CD8-positive, alpha-beta T cell (primary cell): ENCODE measurements at regions of chr11 and their contacts with region 1.

Region 1: GRCh38 chr11:46845740-46846509 is at the start of gene CKAP5:
- DNase-seq: peak; percentile 68 to 91 (median 84)
- ATAC-seq: peak; percentile 91
- H3K4me3 ChIP-seq: peak within 1 kb of the TSS; percentile 75 to 85
- H3K4me3 Mint-ChIP-seq: peak within 1 kb of the TSS; percentile 98
- H3K27ac ChIP-seq: peak within 1 kb of the TSS; percentile 64 to 69
- H3K27ac Mint-ChIP-seq: peak within 1 kb of the TSS; percentile 95
- H3K4me1 ChIP-seq: peaks cover 13% of the 10 kb centered on the region
- H3K4me1 Mint-ChIP-seq: peaks cover 37% of the 10 kb centered on the region
- H3K27me3 ChIP-seq: no peaks in the 10 kb centered on the region
- H3K27me3 Mint-ChIP-seq: no peaks in the 10 kb centered on the region
- CTCF ChIP-seq: no peak
- total RNA-seq, gene CKAP5: 18.8 to 22.1 TPM

Region 2: DNA sequence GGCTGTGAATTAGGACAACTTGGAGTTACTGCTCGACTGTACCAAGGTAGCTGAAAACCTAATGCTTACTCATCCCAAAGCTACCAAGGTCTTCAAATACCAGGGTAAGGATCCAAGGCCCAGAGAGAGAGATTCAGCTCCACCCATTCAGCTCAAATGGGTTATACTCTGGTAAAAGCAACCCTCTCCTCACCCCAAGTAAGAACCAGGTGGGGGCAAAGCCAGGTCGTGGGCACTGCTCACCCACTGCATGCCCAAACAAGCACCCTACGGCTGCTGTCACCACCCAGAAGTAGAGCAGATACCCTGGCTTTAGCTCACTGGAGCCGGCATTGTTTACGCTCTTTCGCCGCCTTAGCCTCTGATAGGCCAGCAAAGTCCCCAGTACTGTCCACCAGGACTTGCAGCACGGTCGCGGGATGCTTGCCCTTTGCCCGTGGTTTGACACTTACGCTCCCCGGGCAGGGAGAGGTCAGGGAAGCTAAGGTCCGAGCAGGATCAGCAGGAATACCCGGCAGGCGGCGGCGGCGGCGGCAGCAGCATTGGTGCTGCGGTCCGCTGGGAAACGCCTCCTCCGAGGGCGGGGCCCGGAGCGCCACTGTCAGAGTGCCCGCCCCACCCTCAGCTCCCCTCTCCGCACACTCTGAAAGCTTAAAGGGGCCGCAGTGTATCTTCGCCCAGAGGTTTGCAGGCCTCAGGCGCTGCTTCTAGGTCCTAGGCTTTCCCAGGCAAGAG is 19.4 kb before region 1 on chr11:
- CTCF ChIA-PET with region 1: interaction called, 4 read pairs
- POLR2A ChIA-PET with region 1: interaction called, 3 read pairs
- intact Hi-C with region 1: loop called (anchors 1 kb)
- DNase-seq: peak; percentile 41 to 82 (median 75)
- ATAC-seq: peak; percentile 100
- H3K4me3 ChIP-seq: peak overlapping the region; percentile 57 to 60
- H3K4me3 Mint-ChIP-seq: peak overlapping the region; percentile 84
- H3K27ac ChIP-seq: no peak overlapping the region
- H3K27ac Mint-ChIP-seq: peak overlapping the region; percentile 32
- H3K4me1 ChIP-seq: peaks cover 16% of the 10 kb centered on the region
- H3K4me1 Mint-ChIP-seq: peaks cover 34% of the 10 kb centered on the region
- H3K27me3 ChIP-seq: no peaks in the 10 kb centered on the region
- H3K27me3 Mint-ChIP-seq: no peaks in the 10 kb centered on the region
- CTCF ChIP-seq: no peak

Region 3: DNA sequence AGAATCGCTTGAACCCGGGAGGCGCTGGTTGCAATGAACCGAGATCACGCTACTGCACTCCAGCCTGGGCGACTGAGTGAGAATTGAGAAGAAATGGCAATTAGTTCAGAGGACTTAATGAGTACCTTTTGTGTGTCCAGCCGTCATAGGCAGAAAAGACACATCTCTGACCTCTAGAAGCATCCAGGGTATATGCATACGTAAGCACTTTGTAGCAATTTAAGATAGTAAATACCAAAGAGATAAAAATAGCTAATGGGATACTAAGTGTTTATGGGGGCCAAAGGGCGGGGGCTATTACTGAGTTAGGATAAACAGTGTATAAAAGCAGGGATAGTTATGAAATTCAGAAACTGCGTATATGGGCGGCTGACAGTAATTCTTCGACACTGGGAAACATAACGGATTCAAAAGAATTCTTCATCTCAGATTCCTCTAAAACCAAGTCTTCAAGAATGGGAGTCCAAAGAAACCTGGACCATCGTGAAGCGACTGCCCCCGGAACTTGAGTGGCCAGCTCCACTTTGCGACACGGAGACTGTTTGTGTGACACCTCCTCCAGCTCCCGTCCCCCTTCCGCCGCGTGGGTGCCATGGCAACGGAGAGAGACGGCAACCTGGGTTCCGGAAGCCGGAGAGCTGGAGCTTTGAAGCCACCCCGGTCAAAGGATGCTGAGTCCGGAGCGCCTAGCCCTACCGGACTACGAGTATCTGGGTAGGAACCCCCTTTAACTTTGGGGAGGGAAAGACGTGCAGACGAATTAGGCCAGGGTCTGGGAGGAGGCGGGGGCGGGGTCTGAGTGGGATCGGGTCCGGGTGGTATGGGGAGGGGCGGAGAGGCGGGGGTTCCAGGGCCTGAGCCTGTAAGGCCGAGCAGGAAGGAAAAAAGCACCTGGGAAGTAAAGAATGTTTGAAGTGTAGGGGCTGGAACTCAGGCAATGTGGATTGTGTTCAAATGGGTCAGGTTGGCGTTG is 90.5 kb after region 1 on chr11 and contains the start of gene CSTPP1:
- CTCF ChIA-PET with region 1: no interaction called
- POLR2A ChIA-PET with region 1: no interaction called
- intact Hi-C with region 1: loop called in 1 of 2 experiments (anchors 1 kb)
- DNase-seq: peak; percentile 80 to 97 (median 93)
- ATAC-seq: peak; percentile 96
- H3K4me3 ChIP-seq: peak within 1 kb of the TSS; percentile 73 to 82
- H3K4me3 Mint-ChIP-seq: peak within 1 kb of the TSS; percentile 97
- H3K27ac ChIP-seq: peak within 1 kb of the TSS; percentile 58 to 71
- H3K27ac Mint-ChIP-seq: peak within 1 kb of the TSS; percentile 95
- H3K4me1 ChIP-seq: peaks cover 9% of the 10 kb centered on the region
- H3K4me1 Mint-ChIP-seq: peaks cover 20% of the 10 kb centered on the region
- H3K27me3 ChIP-seq: no peaks in the 10 kb centered on the region
- H3K27me3 Mint-ChIP-seq: peaks cover 6% of the 10 kb centered on the region
- CTCF ChIP-seq: no peak
- total RNA-seq, gene CSTPP1: 4.1 to 4.6 TPM

Region 4: GRCh38 chr11:47213985-47214564 is 368.1 kb after region 1 on chr11:
- CTCF ChIA-PET with region 1: no interaction called
- POLR2A ChIA-PET with region 1: no interaction called
- intact Hi-C with region 1: loop called in 1 of 2 experiments (anchors 1 kb)
- DNase-seq: peak; percentile 64 to 90 (median 84)
- ATAC-seq: peak; percentile 67
- H3K4me3 ChIP-seq: peak overlapping the region; percentile 65 to 95
- H3K4me3 Mint-ChIP-seq: peak overlapping the region; percentile 96
- H3K27ac ChIP-seq: peak overlapping the region; percentile 85 to 93
- H3K27ac Mint-ChIP-seq: peak overlapping the region; percentile 97
- H3K4me1 ChIP-seq: peaks cover 16% of the 10 kb centered on the region
- H3K4me1 Mint-ChIP-seq: peaks cover 31% of the 10 kb centered on the region
- H3K27me3 ChIP-seq: no peaks in the 10 kb centered on the region
- H3K27me3 Mint-ChIP-seq: no peaks in the 10 kb centered on the region
- CTCF ChIP-seq: no peak

Region 5: GRCh38 chr11:47766305-47767227 is 920.6 kb after region 1 on chr11:
- CTCF ChIA-PET with region 1: no interaction called
- POLR2A ChIA-PET with region 1: no interaction called
- intact Hi-C with region 1: loop called in 1 of 2 experiments (anchors 5 kb)
- DNase-seq: peak; percentile 48 to 90 (median 74)
- ATAC-seq: peak; percentile 33
- H3K4me3 ChIP-seq: peak overlapping the region; percentile 75 to 79
- H3K4me3 Mint-ChIP-seq: peak overlapping the region; percentile 94
- H3K27ac ChIP-seq: peak overlapping the region; percentile 91 to 97
- H3K27ac Mint-ChIP-seq: peak overlapping the region; percentile 100
- H3K4me1 ChIP-seq: peaks cover 29% of the 10 kb centered on the region
- H3K4me1 Mint-ChIP-seq: peaks cover 31% of the 10 kb centered on the region
- H3K27me3 ChIP-seq: no peaks in the 10 kb centered on the region
- H3K27me3 Mint-ChIP-seq: no peaks in the 10 kb centered on the region
- CTCF ChIP-seq: no peak